Activated CD4-positive, alpha-beta memory T cell treated with anti-CD3 and anti-CD28 coated beads for 36 hours (primary cell): ENCODE measurements at regions of chr3 and their contacts with region 1.

Region 1: GRCh38 chr3:187679638-187680396 is 9.6 kb upstream of the SST start:
- DNase-seq: peak; percentile 76
- H3K4me3 Mint-ChIP-seq: no peak overlapping the region
- H3K27ac Mint-ChIP-seq: no peak overlapping the region
- H3K4me1 Mint-ChIP-seq: peaks cover 3% of the 10 kb centered on the region
- H3K27me3 Mint-ChIP-seq: peaks cover 31% of the 10 kb centered on the region

Region 2: DNA sequence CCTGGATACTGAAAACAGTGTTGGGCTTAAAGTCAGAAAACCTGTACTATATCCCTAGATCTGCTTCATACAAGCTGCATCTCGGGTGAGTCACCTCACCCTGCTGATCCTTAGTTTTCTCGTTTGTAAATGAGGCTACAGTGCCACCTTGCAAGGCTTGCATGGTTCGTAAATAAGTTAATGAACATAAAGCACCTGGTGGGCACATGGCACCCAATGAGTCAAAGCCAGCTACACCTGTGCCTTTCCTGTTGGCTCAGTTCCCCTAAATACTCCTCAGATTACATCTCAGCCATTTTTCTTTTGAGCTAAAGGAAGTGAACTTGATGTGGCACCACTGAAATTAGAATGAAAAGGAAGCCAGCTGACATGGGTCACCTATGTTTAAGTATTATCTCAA is 456.0 kb before region 1 on chr3:
- CTCF ChIA-PET with region 1: interaction called, 46 read pairs
- POLR2A ChIA-PET with region 1: no interaction called
- intact Hi-C with region 1: loop called (anchors 2 kb)
- DNase-seq: no peak
- H3K4me3 Mint-ChIP-seq: no peak overlapping the region
- H3K27ac Mint-ChIP-seq: no peak overlapping the region
- H3K4me1 Mint-ChIP-seq: no peaks in the 10 kb centered on the region
- H3K27me3 Mint-ChIP-seq: peaks cover 3% of the 10 kb centered on the region

Region 3: DNA sequence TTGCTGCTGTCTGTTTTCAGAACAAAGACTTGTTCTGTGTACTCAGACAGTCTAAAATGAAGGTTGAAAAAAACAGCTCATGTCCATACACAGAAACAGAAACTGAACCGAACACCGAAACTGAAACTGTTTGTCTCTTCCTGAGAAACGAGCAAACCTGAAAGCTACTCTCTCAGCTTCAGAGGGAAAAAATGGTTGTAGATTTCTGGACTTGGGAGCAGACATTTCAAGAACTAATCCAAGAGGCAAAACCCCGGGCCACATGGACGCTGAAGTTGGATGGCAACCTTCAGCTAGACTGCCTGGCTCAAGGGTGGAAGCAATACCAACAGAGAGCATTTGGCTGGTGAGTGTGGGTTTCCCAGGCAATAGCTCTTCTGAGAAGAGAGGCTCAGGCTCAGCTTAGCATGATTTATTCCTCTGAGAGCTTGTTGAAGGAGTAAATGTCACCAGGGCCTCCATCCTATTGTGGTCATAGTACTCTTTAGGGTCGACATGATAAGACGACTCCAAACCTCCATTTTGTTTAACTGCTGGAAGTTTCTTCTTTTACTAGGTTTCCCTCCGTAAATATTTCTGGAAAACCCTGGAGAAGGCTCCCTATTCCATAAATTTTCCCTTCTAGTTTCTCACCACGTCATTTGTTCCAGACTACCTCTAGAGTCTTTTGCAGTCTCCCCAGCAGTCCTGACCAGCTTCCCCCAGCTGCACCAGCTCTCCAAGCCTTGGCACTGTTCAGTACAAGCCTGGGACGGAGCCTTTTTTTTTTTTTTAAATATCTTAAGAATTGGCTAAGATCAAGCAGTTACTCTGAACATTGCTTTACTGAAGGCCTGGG is 311.3 kb before region 1 on chr3 and contains the start of gene RTP4:
- CTCF ChIA-PET with region 1: interaction called, 16 read pairs
- POLR2A ChIA-PET with region 1: no interaction called
- intact Hi-C with region 1: no loop called
- DNase-seq: peak; percentile 42
- H3K4me3 Mint-ChIP-seq: peak within 1 kb of the TSS; percentile 74
- H3K27ac Mint-ChIP-seq: peak within 1 kb of the TSS; percentile 88
- H3K4me1 Mint-ChIP-seq: peaks cover 27% of the 10 kb centered on the region
- H3K27me3 Mint-ChIP-seq: no peaks in the 10 kb centered on the region
- total RNA-seq, gene RTP4: 1.7 to 2.7 TPM

Region 4: DNA sequence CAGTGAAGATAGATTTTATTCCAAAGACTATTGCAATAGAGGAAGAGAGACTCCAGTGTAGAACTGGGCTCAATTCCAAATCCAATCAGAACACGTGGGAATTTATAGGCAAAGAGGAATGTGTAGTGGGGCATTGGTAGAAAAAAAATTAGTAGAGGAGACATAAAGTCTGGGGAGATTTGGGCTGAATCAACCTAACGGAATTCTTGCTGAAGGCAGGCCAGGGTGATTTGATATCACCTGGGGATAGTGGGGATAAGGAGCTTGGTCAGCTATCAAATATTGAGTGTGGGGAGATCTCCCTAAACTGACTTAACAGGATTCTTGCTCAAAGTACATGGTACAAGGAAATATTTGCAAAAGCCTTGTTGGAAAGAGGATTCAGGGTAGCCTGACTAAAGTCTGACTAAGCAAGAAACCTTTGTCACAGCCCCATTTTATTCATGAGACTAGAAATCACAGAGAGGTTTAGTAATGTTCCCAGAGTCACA is 39.2 kb before region 1 on chr3:
- CTCF ChIA-PET with region 1: interaction called, 10 read pairs
- POLR2A ChIA-PET with region 1: no interaction called
- intact Hi-C with region 1: no loop called
- DNase-seq: no peak
- H3K4me3 Mint-ChIP-seq: no peak overlapping the region
- H3K27ac Mint-ChIP-seq: no peak overlapping the region
- H3K4me1 Mint-ChIP-seq: no peaks in the 10 kb centered on the region
- H3K27me3 Mint-ChIP-seq: peaks cover 7% of the 10 kb centered on the region

Region 5: GRCh38 chr3:187709155-187709554 is 29.3 kb after region 1 on chr3:
- CTCF ChIA-PET with region 1: interaction called, 78 read pairs
- POLR2A ChIA-PET with region 1: no interaction called
- intact Hi-C with region 1: loop called (anchors 1 kb)
- DNase-seq: no peak
- H3K4me3 Mint-ChIP-seq: no peak overlapping the region
- H3K27ac Mint-ChIP-seq: no peak overlapping the region
- H3K4me1 Mint-ChIP-seq: peaks cover 7% of the 10 kb centered on the region
- H3K27me3 Mint-ChIP-seq: no peaks in the 10 kb centered on the region